ENCODE measurements at regions of chr3 and their contacts with region 1.

Region 1: DNA sequence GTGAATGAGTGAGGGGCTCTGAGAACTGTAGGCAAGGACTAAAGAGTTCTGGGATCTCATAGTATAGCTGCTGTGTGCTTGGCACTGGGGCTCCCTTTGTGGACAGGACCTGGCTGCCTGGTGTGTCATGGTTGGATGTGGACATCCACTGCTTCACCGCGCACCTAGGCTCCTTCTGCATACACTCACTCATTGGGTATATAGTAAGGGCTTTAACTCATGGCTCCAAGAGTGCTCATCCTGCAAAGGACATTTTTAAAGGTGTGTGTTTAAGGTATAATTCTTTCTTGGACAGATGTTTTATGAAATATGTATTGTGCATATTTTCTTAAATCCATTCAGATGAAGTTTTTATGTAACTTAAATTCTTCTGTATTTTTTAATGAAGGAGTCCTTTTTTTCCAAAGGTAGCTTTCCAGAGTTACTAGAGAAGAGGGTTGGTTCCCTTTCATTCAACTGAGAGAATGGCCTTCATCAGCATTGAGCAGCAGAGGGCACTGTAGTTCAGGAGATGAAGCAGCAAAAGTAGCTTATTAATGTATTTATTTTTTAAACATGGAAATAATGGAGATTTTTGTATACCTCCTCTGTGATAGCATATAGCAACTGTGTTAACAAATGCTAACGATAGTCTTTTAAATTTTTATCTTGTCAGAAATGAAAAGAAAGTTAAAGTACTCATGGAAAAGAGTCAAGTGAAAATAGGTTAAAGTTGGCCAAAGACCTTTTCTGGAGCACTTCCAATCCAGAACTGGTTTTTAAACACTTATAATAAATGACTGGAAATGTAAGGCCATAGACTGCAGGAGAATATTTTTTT is 25.2 kb downstream of the OXNAD1 start:
- DNase-seq: peak; percentile 64 to 77 (median 71)
- H3K4me3 ChIP-seq: peak overlapping the region in 2 of 7 experiments; percentile 28 to 34
- H3K27ac ChIP-seq: no peak overlapping the region
- H3K4me1 ChIP-seq: peaks cover 17 to 57% (median 41%) of the 10 kb centered on the region in 4 experiments
- H3K27me3 ChIP-seq: no peaks in the 10 kb centered on the region

Region 2: GRCh38 chr3:16270855-16271254 is 19.4 kb before region 1 on chr3:
- CTCF ChIA-PET with region 1: interaction called, 38 read pairs
- POLR2A ChIA-PET with region 1: no interaction called
- DNase-seq: no peak
- H3K4me3 ChIP-seq: no peak overlapping the region
- H3K27ac ChIP-seq: no peak overlapping the region
- H3K4me1 ChIP-seq: peaks cover under 1 to 11% (median 10%) of the 10 kb centered on the region in 4 experiments
- H3K27me3 ChIP-seq: no peaks in the 10 kb centered on the region

Region 3: DNA sequence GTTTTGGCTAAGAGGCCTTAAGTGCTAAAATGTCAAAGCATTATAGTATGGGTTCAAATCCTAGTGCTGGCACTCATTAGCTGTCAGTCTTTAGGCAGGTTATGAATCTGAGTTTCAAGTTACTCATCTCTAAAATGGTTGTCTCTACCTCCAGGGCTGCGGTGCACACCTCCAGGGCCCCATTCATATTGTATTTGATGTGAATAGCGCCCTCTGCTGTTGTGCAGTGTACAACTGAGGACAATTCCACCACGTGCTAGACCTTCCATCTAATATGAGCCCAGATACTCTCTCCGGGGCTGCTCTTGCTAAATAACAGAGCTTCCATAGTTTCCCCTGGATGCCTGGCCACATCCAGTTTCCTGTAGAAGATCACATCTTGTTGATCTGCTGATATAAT is 29.1 kb after region 1 on chr3:
- CTCF ChIA-PET with region 1: interaction called, 66 read pairs
- POLR2A ChIA-PET with region 1: no interaction called
- DNase-seq: peak; percentile 46 to 63 (median 61)
- H3K4me3 ChIP-seq: no peak overlapping the region
- H3K27ac ChIP-seq: no peak overlapping the region
- H3K4me1 ChIP-seq: peaks cover 3 to 9% (median 6%) of the 10 kb centered on the region in 4 experiments
- H3K27me3 ChIP-seq: no peaks in the 10 kb centered on the region

Region 4: DNA sequence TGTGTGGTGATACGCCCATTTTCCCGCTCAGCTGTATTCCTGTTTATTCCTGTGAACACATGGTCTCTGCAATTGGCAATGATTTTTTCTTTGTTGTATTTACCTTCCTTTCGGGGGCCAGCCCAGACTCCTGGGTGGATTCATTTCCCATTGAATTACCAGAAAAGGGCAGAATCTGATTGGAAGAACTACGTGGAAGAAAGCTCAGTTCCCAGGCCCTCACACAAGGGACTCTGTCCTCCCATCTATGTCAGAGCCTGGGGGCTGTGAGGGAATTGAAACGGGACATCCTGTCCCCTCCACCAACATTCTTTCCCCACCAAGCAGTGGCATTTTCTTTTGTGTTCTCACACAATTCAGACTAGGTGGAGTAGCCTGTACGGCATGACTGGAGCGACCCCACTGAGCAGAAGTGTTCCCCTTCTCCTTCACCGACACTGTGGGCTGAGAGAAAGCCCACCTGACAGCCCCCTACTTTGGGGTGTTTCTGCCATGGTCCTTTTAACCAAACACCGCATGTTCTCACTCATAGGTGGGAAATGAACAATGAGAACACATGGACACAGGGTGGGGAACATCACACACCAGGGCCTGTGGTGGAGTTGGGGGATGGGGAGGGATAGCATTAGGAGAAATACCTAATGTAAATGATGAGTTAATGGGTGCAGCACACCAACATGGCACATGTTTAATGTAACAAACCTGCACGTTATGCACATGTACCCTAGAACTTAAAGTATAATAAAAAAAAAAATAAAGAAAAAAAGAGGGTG is 255.4 kb after region 1 on chr3:
- CTCF ChIA-PET with region 1: interaction called, 39 read pairs
- POLR2A ChIA-PET with region 1: no interaction called
- DNase-seq: no peak
- H3K4me3 ChIP-seq: no peak overlapping the region
- H3K27ac ChIP-seq: no peak overlapping the region
- H3K4me1 ChIP-seq: peaks cover 0 to 27% (median 17%) of the 10 kb centered on the region in 4 experiments
- H3K27me3 ChIP-seq: no peaks in the 10 kb centered on the region